HAP-1 (cell line): ENCODE measurements at regions of chr12 and their contacts with region 1.

Region 1: GRCh38 chr12:39764944-39765560 is 145.4 kb upstream of the ABCD2 start:
- DNase-seq: peak; percentile 14 to 85
- H3K4me3 ChIP-seq: no peak overlapping the region
- H3K4me1 ChIP-seq: peaks cover 19% of the 10 kb centered on the region
- H3K27me3 ChIP-seq: no peaks in the 10 kb centered on the region

Region 2: DNA sequence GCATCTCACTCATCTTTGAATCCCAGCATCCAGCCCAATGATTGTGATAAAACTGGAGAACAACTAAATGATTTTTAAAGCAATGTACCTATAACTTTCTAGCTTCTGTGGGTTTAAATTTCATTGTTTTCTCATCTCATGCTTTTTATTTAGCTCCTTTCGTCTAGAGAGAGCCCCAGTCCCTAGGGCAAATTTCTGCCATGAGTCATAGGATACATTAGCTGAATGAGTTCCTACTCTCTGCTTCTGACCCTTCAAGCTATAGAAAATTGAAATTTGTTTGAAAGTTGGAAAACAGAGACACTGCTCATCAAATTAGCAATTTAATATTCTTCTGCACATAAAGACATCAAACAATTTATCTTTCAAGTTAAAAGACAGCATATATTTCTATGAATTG is 436.0 kb before region 1 on chr12:
- in situ Hi-C with region 1: no loop called
- DNase-seq: no peak
- H3K4me3 ChIP-seq: no peak overlapping the region
- H3K4me1 ChIP-seq: no peaks in the 10 kb centered on the region
- H3K27me3 ChIP-seq: no peaks in the 10 kb centered on the region

Region 3: DNA sequence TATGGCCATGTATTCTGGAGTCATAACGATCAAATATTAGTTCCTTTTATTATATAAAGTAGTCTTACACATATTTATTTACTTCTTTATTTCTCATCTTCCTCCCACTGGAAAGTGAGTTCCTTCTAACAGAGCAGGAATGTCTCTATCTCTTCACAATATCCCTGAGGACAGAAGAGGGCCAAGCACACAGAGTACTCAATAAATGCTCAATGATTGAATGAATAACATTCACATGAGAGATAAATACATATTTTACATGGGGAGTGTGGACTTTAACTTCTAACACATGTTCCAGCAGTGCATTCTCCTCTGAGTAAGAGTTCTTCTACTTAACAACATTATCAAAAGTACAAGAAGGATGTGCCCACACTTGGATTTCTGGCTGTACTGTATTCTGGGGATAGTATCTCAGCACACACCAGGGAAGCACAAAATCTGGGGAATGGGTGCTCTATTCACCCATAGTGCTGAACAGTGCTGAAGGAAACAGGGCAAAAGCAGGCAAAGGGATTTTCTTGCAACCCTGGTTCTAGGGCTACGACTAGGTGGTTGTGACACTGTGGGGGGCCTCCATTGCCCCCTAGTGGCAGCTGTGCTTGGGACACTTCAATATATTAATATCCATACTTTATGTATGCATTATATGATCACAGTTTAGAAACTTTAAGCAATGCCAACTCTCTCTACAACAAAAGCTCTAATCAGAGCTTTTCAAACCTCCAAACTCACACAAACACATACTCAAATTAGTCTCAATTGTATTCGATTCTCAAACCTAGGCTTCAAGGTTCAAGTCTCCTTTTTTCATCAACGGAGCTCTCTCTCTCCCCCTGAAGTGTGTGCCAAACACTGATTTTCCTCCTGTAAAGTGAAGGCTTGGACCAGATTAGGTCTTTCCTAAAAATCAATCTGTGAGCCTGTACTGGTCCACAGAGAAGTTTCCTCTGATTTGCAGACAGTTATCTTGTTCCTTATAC is 225.4 kb after region 1 on chr12:
- in situ Hi-C with region 1: loop called (anchors 25 kb)
- DNase-seq: peak; percentile 43 to 76
- H3K4me3 ChIP-seq: no peak overlapping the region
- H3K4me1 ChIP-seq: no peaks in the 10 kb centered on the region
- H3K27me3 ChIP-seq: no peaks in the 10 kb centered on the region

Region 4: GRCh38 chr12:40107098-40107802 is 342.2 kb after region 1 on chr12:
- in situ Hi-C with region 1: loop called (anchors 25 kb)
- DNase-seq: peak; percentile 80 to 94
- H3K4me3 ChIP-seq: no peak overlapping the region; the same call in 1 of the 2 replicates
- H3K4me1 ChIP-seq: peaks cover 19% of the 10 kb centered on the region
- H3K27me3 ChIP-seq: no peaks in the 10 kb centered on the region; the same call in 1 of the 2 replicates